H1 (cell line): ENCODE measurements at regions of chr14 and their contacts with region 1.

Region 1: GRCh38 chr14:67571272-67571850 is 28.7 kb downstream of the PIGH start:
- DNase-seq: peak; percentile 21 to 82
- H3K4me3 ChIP-seq: no peak overlapping the region
- H3K27ac ChIP-seq: no peak overlapping the region
- H3K4me1 ChIP-seq: no peaks in the 10 kb centered on the region
- H3K27me3 ChIP-seq: no peaks in the 10 kb centered on the region
- CTCF ChIP-seq: peak; percentile 92 to 97 (median 96)
- EP300 ChIP-seq: no peak
- POLR2A ChIP-seq: no peak
- RAD21 ChIP-seq: peak; percentile 85 to 87

Region 2: GRCh38 chr14:67532998-67533753 is 38.2 kb before region 1 on chr14 and contains the start of gene PLEKHH1:
- CTCF ChIA-PET with region 1: interaction called, 924 read pairs
- POLR2A ChIA-PET with region 1: interaction called, 9 read pairs
- DNase-seq: peak; percentile 63 to 84
- H3K4me3 ChIP-seq: peak within 1 kb of the TSS; percentile 57 to 82 (median 64)
- H3K27ac ChIP-seq: peak within 1 kb of the TSS; percentile 31; the same call in 1 of the 2 replicates
- H3K4me1 ChIP-seq: peaks cover 0 to 6% (median 2%) of the 10 kb centered on the region in 4 experiments; a peak in 5 of 7 replicates
- H3K27me3 ChIP-seq: no peaks in the 10 kb centered on the region
- CTCF ChIP-seq: peak in 1 of 3 experiments; percentile 3; a peak in 1 of 4 replicates
- EP300 ChIP-seq: no peak
- POLR2A ChIP-seq: peak; percentile 55 to 68
- RAD21 ChIP-seq: no peak
- total RNA-seq, gene PLEKHH1: 27.2 and 33.3 TPM in 2 replicates

Region 3: GRCh38 chr14:67557126-67557525 is 14.2 kb before region 1 on chr14:
- CTCF ChIA-PET with region 1: interaction called, 187 read pairs
- POLR2A ChIA-PET with region 1: interaction called, 6 read pairs
- DNase-seq: no peak
- H3K4me3 ChIP-seq: no peak overlapping the region
- H3K27ac ChIP-seq: no peak overlapping the region
- H3K4me1 ChIP-seq: peaks cover 0 to 3% (median under 1%) of the 10 kb centered on the region in 4 experiments; a peak in 2 of 7 replicates
- H3K27me3 ChIP-seq: no peaks in the 10 kb centered on the region
- CTCF ChIP-seq: no peak
- EP300 ChIP-seq: no peak
- POLR2A ChIP-seq: no peak
- RAD21 ChIP-seq: no peak

Region 4: GRCh38 chr14:67589204-67589770 is 17.9 kb after region 1 on chr14:
- CTCF ChIA-PET with region 1: interaction called, 127 read pairs
- POLR2A ChIA-PET with region 1: interaction called, 6 read pairs
- DNase-seq: no peak
- H3K4me3 ChIP-seq: no peak overlapping the region
- H3K27ac ChIP-seq: no peak overlapping the region
- H3K4me1 ChIP-seq: no peaks in the 10 kb centered on the region
- H3K27me3 ChIP-seq: no peaks in the 10 kb centered on the region
- CTCF ChIP-seq: no peak
- EP300 ChIP-seq: no peak
- POLR2A ChIP-seq: no peak
- RAD21 ChIP-seq: no peak

Region 5: DNA sequence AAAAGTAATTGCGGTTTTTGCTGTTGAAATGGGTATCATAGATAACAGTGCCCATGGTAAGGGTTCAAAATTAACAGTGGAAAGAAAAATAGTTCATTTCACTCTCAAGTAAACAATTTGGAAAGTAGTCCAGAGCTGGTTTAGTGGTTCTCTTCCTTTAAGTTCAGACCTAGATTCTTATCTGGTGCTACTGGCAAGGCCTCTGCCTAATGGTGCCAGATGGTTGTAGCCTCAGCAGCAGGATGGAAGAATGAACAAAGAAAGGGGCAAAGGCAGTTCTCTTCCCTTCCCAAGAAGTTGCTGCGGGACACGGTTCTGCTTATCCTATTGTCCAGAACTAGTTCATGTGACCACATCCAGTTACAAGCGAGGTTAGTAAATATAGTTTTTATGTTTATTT is 58.8 kb after region 1 on chr14:
- CTCF ChIA-PET with region 1: no interaction called
- POLR2A ChIA-PET with region 1: no interaction called
- DNase-seq: no peak
- H3K4me3 ChIP-seq: no peak overlapping the region
- H3K27ac ChIP-seq: no peak overlapping the region
- H3K4me1 ChIP-seq: no peaks in the 10 kb centered on the region
- H3K27me3 ChIP-seq: no peaks in the 10 kb centered on the region
- CTCF ChIP-seq: no peak
- EP300 ChIP-seq: no peak
- POLR2A ChIP-seq: no peak
- RAD21 ChIP-seq: no peak

Region 6: DNA sequence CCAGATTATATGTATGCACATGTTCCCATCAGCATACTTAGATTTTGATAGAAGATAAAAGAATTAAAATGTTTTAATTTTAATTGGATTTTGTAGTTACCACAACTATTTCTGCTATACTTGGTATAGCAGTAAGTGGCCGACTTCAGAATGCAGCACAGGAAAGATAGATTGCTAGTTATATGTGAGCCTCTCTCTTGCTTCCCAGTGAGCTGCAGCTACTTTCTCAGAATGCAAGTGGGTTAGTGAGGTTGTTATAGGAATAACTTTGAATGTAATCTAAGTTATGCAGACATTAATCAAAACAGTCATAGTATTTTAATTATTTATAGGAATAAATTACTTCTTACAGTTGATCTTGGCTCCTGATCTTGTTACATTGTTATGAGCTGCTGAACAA is 488.8 kb after region 1 on chr14:
- CTCF ChIA-PET with region 1: no interaction called
- POLR2A ChIA-PET with region 1: no interaction called
- DNase-seq: no peak
- H3K4me3 ChIP-seq: no peak overlapping the region
- H3K27ac ChIP-seq: no peak overlapping the region
- H3K4me1 ChIP-seq: 0 out of 7 replicates have a peak, but pooled peaks cover 0 to 2% (median 0%) of the 10 kb centered on the region in 4 experiments
- H3K27me3 ChIP-seq: no peaks in the 10 kb centered on the region
- CTCF ChIP-seq: no peak
- EP300 ChIP-seq: no peak
- POLR2A ChIP-seq: no peak
- RAD21 ChIP-seq: no peak

Region 7: DNA sequence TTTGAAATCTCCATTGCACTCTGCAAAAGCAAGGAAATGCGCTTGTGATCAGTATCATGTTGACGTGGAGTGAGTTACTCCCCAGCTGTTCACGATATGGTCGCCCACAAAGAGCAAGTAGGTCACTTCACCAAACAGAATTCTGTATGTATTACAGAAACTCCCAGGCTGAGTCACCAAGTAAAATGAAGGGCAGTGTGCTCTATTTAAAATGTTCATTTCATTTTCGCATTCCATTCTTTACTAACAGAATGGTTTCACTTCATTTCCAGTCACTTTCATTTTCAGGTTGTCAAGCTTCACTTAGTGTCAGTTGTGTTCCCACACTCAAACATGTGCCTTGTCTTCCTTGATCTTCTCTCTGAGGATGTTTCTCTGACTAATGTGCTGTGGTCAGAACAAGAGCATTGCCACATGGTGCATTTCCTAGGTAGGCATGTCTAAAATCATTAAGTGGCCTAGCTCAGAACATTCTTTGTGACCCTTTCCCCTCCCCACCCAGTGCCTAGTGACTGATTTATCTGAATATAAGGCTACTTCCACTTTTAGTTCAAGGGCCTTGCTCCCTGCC is 639.5 kb after region 1 on chr14:
- CTCF ChIA-PET with region 1: no interaction called
- POLR2A ChIA-PET with region 1: no interaction called
- DNase-seq: no peak
- H3K4me3 ChIP-seq: no peak overlapping the region
- H3K27ac ChIP-seq: no peak overlapping the region
- H3K4me1 ChIP-seq: peaks cover 0 to 6% (median 0%) of the 10 kb centered on the region in 4 experiments; a peak in 2 of 7 replicates
- H3K27me3 ChIP-seq: no peaks in the 10 kb centered on the region
- CTCF ChIP-seq: no peak
- EP300 ChIP-seq: no peak
- POLR2A ChIP-seq: no peak
- RAD21 ChIP-seq: no peak